Panc1 (cell line): ENCODE measurements at regions of chr20 and their contacts with region 1.

Region 1: DNA sequence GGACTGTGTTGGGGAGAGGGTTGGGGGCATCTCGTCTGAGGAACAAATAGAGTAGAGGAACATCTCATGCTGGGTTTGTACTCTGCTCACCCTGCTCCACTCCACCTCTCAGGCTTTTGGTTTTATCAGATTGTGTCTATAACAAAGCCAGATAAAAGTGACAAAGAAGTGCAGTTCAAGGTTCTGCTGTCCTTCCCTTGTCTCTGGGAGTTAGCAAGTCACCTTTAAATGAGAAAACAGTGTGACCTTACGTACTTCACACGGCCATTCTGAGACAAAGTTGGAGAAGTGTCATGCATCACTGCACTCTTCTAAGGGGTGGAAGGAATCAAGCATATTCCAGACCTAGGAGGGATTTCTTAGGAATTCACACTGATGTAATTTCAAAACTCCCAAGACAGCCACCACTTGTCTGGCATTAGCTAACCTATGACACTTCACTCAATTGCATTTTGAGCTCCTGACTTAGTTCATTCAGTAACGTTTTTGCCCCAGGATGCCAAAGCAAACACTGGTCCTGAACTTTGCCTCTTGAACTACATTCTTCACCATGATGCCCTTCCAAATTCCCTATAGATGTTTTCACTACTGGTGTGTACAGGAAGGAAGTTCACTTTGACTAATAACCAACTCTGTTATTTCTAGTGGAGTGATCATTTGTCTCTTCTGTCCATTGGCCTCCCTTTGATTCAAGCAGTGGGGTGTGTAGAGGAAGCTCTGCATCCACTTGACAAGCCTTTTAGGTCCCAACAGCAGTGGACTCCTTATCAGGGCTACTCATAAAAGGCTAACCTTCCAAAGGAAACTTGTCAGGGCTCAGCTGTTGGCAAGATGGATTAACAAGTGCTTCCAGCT is 647.6 kb upstream of the FLRT3 start:
- DNase-seq: no peak
- ATAC-seq: no peak
- H3K4me3 ChIP-seq: no peak overlapping the region
- H3K27ac ChIP-seq: no peak overlapping the region
- H3K4me1 ChIP-seq: no peaks in the 10 kb centered on the region
- H3K27me3 ChIP-seq: no peaks in the 10 kb centered on the region
- CTCF ChIP-seq: no peak

Region 2: DNA sequence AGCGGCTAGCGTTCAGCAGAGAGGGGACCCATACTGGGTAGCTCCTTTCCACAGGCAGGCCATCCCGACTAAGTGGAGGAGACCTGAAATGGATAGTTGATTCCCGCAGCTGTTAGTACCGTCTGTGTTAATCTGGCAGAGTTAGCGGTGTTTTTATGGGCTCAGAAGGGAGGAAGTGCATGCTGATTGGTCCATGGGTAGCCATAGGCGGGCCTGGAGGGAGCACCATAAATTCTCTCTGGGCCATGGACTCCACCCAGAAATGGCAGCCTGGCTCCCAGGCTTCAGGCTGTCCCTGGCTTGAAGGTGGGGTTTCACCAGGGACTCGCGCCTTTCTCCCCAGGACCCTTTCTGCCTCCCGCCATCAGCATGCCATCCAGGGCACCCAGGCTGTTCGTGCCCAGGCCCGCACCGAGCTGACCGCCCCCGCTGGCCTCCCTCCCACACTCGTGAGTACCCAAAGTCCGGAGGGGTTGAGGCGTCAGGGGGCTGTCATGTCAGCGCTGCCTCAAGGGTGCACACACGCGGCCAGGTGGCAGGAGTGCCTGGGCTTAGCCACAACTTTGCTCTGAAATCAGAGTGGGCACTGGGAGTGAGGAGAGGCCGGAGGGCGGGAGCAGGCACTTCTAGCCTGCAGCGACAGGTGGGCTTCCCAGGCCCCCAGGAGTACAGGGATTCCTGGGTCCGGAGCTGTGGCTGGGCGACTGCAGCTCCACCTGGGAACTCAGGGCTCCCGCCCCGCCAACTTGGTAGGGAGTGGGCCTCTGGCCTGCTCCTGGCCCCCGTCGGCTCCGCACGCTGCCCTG is 46.8 kb after region 1 on chr20:
- CTCF ChIA-PET with region 1: no interaction called
- POLR2A ChIA-PET with region 1: no interaction called
- in situ Hi-C with region 1: no loop called
- intact Hi-C with region 1: no loop called
- DNase-seq: no peak
- ATAC-seq: no peak
- H3K4me3 ChIP-seq: no peak overlapping the region
- H3K27ac ChIP-seq: no peak overlapping the region
- H3K4me1 ChIP-seq: no peaks in the 10 kb centered on the region
- H3K27me3 ChIP-seq: no peaks in the 10 kb centered on the region
- CTCF ChIP-seq: no peak

Region 3: DNA sequence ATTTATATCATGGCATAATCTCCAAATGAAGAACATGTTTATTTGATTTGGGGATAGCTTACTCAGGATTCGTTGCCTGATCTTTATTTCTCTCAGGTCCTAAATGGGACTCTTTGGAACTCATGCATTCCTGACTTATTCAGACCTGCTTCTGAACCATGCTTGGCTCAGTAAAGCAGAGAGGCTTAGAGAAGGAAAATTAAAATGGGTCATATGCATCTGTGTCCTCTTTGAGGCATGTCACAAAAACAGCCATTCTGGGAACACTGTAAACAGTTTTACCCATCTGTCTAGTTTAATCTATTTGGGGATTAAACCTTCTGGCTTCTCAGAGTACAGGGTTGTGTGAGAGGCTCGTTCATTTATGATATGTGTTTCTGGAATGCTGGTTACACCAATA is 570.9 kb after region 1 on chr20:
- CTCF ChIA-PET with region 1: no interaction called
- POLR2A ChIA-PET with region 1: interaction called, 10 read pairs
- in situ Hi-C with region 1: no loop called
- intact Hi-C with region 1: no loop called
- DNase-seq: no peak
- ATAC-seq: no peak
- H3K4me3 ChIP-seq: no peak overlapping the region
- H3K27ac ChIP-seq: no peak overlapping the region
- H3K4me1 ChIP-seq: no peaks in the 10 kb centered on the region
- H3K27me3 ChIP-seq: no peaks in the 10 kb centered on the region
- CTCF ChIP-seq: no peak